PC-3 (cell line): ENCODE measurements at regions of chr4 and their contacts with region 1.

Region 1: DNA sequence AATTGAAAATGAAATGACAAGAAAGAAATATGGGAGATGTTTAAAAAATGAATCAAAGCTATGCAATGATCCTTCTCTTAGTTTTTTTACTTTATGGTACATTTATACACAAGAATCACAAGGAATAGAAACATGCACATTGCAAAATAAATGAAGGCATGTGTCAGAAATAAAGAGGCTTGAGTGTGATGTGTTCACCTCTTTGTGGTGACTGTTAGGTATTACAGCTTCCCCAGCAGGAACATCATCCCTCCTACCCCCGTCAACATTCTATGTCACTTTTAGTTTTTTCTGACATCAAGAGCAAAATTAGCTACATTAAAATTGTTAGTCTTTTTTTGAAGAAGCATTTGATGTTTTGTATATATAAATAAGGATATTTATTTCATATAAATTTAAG is 214.8 kb downstream of the SLC4A4 start:
- DNase-seq: peak; percentile 64
- ATAC-seq: peak; percentile 70
- H3K4me3 ChIP-seq: no peak overlapping the region
- H3K27ac ChIP-seq: no peak overlapping the region
- H3K4me1 ChIP-seq: peaks cover 23% of the 10 kb centered on the region
- H3K27me3 ChIP-seq: no peaks in the 10 kb centered on the region
- CTCF ChIP-seq: peak; percentile 84

Region 2: DNA sequence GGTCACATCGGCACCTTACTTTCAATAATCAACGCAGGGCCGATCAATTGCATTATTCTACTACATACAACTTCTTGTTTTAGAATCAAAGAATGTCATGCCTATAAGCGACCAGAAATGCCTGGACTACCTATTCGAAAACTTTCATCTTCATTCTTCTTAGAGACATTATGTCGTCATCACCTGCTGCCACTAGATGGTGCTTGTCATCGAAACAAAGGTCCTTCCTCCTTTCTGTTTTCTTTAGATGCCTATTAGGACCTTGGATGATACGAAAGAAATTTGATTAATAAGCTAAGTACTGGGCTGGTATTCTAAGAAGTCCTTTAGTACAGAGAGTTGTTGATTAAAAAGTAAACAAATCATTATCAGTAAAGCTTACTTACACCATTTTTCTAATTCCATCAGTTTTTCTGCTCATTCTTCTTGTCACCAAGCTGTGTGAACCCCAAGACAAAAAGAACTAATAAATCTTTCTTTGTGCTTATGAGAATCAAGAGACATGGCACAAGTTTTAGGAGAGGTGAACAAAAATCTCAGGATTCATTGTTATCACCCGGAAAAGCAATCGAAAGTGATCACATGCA is 369.3 kb before region 1 on chr4:
- CTCF ChIA-PET with region 1: interaction called, 3 read pairs
- POLR2A ChIA-PET with region 1: no interaction called
- intact Hi-C with region 1: loop called (anchors 1 kb)
- DNase-seq: peak; percentile 80
- ATAC-seq: peak; percentile 10; the same call in 1 of the 2 replicates
- H3K4me3 ChIP-seq: no peak overlapping the region
- H3K27ac ChIP-seq: no peak overlapping the region
- H3K4me1 ChIP-seq: peaks cover 21% of the 10 kb centered on the region
- H3K27me3 ChIP-seq: peaks cover 16% of the 10 kb centered on the region
- CTCF ChIP-seq: peak; percentile 95

Region 3: DNA sequence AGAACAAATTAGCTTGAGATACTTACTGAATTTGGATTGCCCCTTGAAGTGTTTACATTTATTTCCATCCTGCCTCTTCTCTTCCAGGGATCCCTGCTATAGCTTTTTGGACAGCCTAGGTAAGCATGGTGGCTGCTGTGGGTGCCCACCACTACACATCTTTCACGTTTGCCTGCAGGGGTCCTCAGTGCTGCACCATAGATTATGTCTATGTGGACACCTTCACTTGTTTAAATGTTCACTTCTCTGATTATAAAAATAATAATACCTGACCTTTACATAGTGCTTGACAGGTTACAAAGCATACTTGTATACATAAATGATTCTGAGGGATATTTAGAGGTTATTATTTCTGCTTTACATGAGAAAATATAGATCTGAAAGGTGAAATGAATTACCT is 282.7 kb before region 1 on chr4:
- CTCF ChIA-PET with region 1: interaction called, 9 read pairs
- POLR2A ChIA-PET with region 1: no interaction called
- intact Hi-C with region 1: loop called (anchors 1 kb)
- DNase-seq: peak; percentile 73
- ATAC-seq: peak; percentile 91
- H3K4me3 ChIP-seq: no peak overlapping the region
- H3K27ac ChIP-seq: no peak overlapping the region
- H3K4me1 ChIP-seq: no peaks in the 10 kb centered on the region; the same call in 1 of the 2 replicates
- H3K27me3 ChIP-seq: no peaks in the 10 kb centered on the region
- CTCF ChIP-seq: peak; percentile 81

Region 4: DNA sequence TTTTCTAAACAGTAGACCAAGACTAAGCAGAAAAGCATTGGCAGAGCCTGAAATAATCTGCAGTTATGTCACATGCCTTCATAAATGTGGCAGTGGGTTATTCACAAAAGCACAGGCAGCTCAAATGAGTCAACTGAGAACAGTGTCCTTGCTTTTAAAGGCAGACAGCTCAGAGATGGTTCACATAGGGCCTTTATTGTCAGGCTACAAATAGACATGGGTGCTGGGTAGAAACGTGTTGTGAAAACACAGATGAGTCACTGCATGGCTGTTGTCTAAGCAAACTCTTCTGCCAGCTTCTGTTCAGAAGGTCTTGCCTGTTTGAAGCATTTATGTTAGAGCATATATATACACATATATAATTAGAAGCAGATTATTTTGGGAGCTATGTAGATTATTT is 96.8 kb before region 1 on chr4:
- CTCF ChIA-PET with region 1: no interaction called
- POLR2A ChIA-PET with region 1: no interaction called
- intact Hi-C with region 1: loop called (anchors 5 kb)
- DNase-seq: peak; percentile 92
- ATAC-seq: peak; percentile 100
- H3K4me3 ChIP-seq: no peak overlapping the region
- H3K27ac ChIP-seq: peak overlapping the region; percentile 53
- H3K4me1 ChIP-seq: peaks cover 14% of the 10 kb centered on the region
- H3K27me3 ChIP-seq: no peaks in the 10 kb centered on the region
- CTCF ChIP-seq: no peak

Region 5: DNA sequence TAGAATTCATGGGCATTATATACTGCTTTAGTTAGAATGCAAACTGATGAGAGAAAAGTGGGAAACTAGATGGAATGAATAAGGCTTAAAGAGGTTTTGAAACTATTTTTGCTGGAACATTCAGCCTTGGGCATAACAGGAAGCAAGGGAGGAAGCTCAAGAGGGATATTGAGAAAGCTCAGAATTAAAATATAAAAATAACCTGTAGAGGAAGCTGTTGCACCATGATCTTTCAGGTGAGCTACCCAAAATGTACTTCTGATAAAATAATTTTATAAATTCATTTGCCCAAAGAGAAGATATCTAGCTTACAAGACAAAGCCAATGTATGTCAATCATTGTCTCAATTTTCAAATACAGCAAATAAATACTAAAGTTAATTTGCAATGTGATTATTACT is 219.0 kb after region 1 on chr4:
- CTCF ChIA-PET with region 1: no interaction called
- POLR2A ChIA-PET with region 1: no interaction called
- intact Hi-C with region 1: no loop called
- DNase-seq: peak; percentile 55
- ATAC-seq: no peak
- H3K4me3 ChIP-seq: no peak overlapping the region
- H3K27ac ChIP-seq: no peak overlapping the region
- H3K4me1 ChIP-seq: peaks cover 12% of the 10 kb centered on the region
- H3K27me3 ChIP-seq: peaks cover 27% of the 10 kb centered on the region; the same call in 1 of the 2 replicates
- CTCF ChIP-seq: peak; percentile 59

Region 6: GRCh38 chr4:71860643-71861042 is 307.0 kb after region 1 on chr4:
- CTCF ChIA-PET with region 1: no interaction called
- POLR2A ChIA-PET with region 1: no interaction called
- intact Hi-C with region 1: no loop called
- DNase-seq: peak; percentile 48
- ATAC-seq: no peak
- H3K4me3 ChIP-seq: no peak overlapping the region
- H3K27ac ChIP-seq: no peak overlapping the region
- H3K4me1 ChIP-seq: no peaks in the 10 kb centered on the region
- H3K27me3 ChIP-seq: no peaks in the 10 kb centered on the region
- CTCF ChIP-seq: no peak